Activated naive CD4-positive, alpha-beta T cell treated with anti-CD3 and anti-CD28 coated beads for 36 hours (primary cell): ENCODE measurements at regions of chrX and their contacts with region 1.

Region 1: DNA sequence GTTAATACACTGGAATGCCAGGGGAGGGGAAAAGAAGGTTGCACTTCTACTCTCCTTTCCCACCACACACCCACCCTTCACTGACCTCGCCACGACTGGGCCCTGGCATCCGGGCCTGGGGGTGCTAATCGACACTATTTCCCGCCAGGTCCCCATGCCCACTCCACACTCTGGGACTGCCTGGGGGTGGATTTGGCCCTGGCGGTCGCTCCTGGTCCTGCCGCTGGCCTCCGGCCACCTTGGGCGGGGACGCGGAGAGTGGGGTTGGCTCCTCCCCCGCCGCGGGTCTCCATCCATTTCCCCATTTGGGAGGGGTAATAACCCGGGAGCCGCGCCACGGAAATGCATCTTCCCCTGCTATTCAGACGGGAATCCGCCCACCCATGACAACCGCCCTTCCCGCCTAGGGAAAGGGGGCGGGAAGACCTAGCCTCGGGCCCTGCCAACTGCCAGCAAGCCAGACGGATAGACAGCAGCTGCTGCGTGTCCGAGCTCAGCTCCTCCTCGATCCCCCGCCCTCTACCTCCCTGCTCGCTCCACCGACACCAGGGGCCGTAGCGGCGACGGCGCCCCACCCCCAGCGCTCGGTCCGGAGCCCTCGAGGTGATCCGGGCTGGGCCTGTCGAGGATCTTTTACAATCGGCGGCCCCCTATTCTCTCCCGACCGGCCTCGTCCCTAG is 78.1 kb downstream of the RLIM start:
- DNase-seq: peak; percentile 40
- H3K4me3 Mint-ChIP-seq: peak overlapping the region; percentile 73
- H3K27ac Mint-ChIP-seq: peak overlapping the region; percentile 2
- H3K4me1 Mint-ChIP-seq: peaks cover 20% of the 10 kb centered on the region
- H3K27me3 Mint-ChIP-seq: no peaks in the 10 kb centered on the region

Region 2: GRCh38 chrX:74318672-74319071 is 217.6 kb before region 1 on chrX:
- CTCF ChIA-PET with region 1: no interaction called
- intact Hi-C with region 1: no loop called
- DNase-seq: no peak
- H3K4me3 Mint-ChIP-seq: no peak overlapping the region
- H3K27ac Mint-ChIP-seq: no peak overlapping the region
- H3K4me1 Mint-ChIP-seq: no peaks in the 10 kb centered on the region
- H3K27me3 Mint-ChIP-seq: no peaks in the 10 kb centered on the region

Region 3: GRCh38 chrX:74420195-74421035 is 115.9 kb before region 1 on chrX:
- CTCF ChIA-PET with region 1: interaction called, 3 read pairs
- intact Hi-C with region 1: loop called (anchors 1 kb)
- DNase-seq: peak; percentile 26
- H3K4me3 Mint-ChIP-seq: peak overlapping the region; percentile 78
- H3K27ac Mint-ChIP-seq: no peak overlapping the region
- H3K4me1 Mint-ChIP-seq: peaks cover 3% of the 10 kb centered on the region
- H3K27me3 Mint-ChIP-seq: peaks cover 20% of the 10 kb centered on the region

Region 4: DNA sequence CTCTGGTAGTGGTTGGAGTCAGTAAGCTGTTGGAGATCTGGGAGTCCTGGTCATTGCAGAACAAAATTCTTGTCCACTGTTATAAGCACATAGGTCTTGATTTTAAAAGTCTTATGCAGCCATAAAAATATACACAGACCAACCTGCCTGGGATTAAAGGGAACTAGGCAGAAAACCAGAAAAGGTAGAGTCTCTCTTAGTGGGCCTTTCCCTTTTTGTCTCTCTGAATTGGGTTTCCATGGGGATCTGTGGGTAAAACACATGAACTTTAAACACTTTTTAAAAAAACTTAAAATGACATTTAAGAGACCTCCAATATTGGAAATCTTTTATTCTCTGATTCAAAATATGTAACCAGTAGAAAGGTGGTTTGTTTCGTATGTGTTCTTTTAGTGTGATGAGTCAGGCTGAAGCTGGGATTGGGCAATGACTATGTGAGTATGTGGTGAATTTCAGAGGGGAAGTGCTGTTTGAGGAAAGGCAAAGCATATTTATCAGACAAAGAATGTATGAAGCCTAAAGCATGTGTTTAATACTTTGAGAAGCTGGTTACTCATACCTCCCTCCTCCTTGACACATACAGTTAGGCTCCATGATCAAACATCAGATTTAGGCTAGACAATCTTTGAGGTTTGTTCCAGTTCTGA is 85.4 kb before region 1 on chrX:
- CTCF ChIA-PET with region 1: no interaction called
- intact Hi-C with region 1: loop called (anchors 1 kb)
- DNase-seq: peak; percentile 45
- H3K4me3 Mint-ChIP-seq: no peak overlapping the region
- H3K27ac Mint-ChIP-seq: peak overlapping the region; percentile 51
- H3K4me1 Mint-ChIP-seq: peaks cover 22% of the 10 kb centered on the region
- H3K27me3 Mint-ChIP-seq: no peaks in the 10 kb centered on the region